ENCODE measurements at regions of chr7 and their contacts with region 1.

Region 1: DNA sequence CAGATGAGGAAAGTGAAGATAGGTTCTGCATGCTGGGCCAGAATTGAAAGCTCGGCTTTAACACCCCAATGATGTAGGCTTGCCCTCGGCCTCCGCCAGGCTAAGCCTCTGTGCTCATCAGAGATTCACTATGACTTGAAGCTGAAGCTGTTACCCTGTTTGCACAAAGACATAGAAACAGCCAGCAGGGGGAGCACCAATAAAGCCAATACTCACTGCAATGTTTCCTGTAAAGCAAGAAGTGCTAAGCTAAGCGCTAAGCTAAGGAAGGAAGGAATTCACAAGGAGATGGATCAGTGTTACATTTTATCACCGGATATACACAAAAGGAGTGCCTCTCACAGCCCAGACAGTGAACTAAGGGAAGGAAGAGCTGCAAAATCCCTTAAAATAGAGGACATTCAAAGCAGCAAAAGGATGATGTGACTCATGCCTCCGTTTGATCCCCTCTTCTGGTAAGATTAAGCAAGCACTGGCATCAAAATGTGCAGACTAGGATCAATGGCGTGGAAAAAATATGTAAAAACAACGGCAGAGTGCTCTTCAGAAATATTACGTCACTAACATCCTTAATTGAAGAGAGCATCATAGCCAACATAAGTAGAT is 153.8 kb downstream of the COBL start:
- DNase-seq: peak; percentile 88
- ATAC-seq: peak; percentile 94
- H3K4me3 Mint-ChIP-seq: no peak overlapping the region
- H3K27ac Mint-ChIP-seq: no peak overlapping the region
- H3K4me1 Mint-ChIP-seq: peaks cover 6% of the 10 kb centered on the region
- H3K27me3 Mint-ChIP-seq: peaks cover 11% of the 10 kb centered on the region
- CTCF ChIP-seq: peak; percentile 62

Region 2: GRCh38 chr7:50610521-50611277 is 552.1 kb before region 1 on chr7:
- CTCF ChIA-PET with region 1: interaction called, 12 read pairs
- POLR2A ChIA-PET with region 1: no interaction called
- intact Hi-C with region 1: no loop called
- DNase-seq: peak; percentile 80
- ATAC-seq: peak; percentile 83
- H3K4me3 Mint-ChIP-seq: no peak overlapping the region
- H3K27ac Mint-ChIP-seq: no peak overlapping the region
- H3K4me1 Mint-ChIP-seq: peaks cover 32% of the 10 kb centered on the region
- H3K27me3 Mint-ChIP-seq: no peaks in the 10 kb centered on the region
- CTCF ChIP-seq: no peak

Region 3: GRCh38 chr7:51055039-51055840 is 107.6 kb before region 1 on chr7:
- CTCF ChIA-PET with region 1: interaction called, 16 read pairs
- POLR2A ChIA-PET with region 1: no interaction called
- intact Hi-C with region 1: no loop called
- DNase-seq: no peak
- ATAC-seq: no peak
- H3K4me3 Mint-ChIP-seq: no peak overlapping the region
- H3K27ac Mint-ChIP-seq: no peak overlapping the region
- H3K4me1 Mint-ChIP-seq: no peaks in the 10 kb centered on the region
- H3K27me3 Mint-ChIP-seq: peaks cover 2% of the 10 kb centered on the region
- CTCF ChIP-seq: no peak

Region 4: DNA sequence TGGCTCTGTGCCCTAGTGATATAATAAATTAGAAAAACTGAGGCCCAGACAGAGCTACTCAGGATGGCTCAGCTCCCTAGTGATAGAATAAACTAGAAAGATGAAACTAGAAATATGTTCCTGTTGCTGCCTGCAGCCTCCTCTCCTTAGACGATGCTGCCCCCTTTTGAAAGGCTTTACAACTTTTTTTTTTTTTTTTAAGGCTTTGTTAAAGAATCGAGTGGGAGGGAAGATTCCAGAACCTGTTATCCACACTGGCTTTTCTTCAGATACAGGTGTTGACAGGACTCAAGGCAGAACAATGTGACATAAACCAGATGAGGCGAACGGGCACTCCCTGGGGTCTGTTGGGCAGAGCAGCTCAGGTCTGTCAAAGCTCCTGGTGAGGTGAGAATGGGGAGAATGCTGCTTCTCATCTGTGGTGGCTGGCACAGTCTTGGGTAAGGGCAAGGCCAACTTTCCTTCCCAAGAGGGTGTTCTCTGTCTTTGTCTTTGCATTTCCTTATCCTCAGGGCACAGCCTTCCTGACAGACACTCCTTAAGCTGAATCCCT is 21.3 kb before region 1 on chr7:
- CTCF ChIA-PET with region 1: interaction called, 33 read pairs
- POLR2A ChIA-PET with region 1: interaction called, 3 read pairs
- intact Hi-C with region 1: no loop called
- DNase-seq: peak; percentile 16
- ATAC-seq: peak; percentile 24
- H3K4me3 Mint-ChIP-seq: no peak overlapping the region
- H3K27ac Mint-ChIP-seq: no peak overlapping the region
- H3K4me1 Mint-ChIP-seq: peaks cover 3% of the 10 kb centered on the region
- H3K27me3 Mint-ChIP-seq: no peaks in the 10 kb centered on the region
- CTCF ChIP-seq: peak; percentile 69

Region 5: GRCh38 chr7:51186201-51186930 is 23.5 kb after region 1 on chr7:
- CTCF ChIA-PET with region 1: interaction called, 13 read pairs
- POLR2A ChIA-PET with region 1: no interaction called
- intact Hi-C with region 1: no loop called
- DNase-seq: no peak
- ATAC-seq: no peak
- H3K4me3 Mint-ChIP-seq: no peak overlapping the region
- H3K27ac Mint-ChIP-seq: no peak overlapping the region
- H3K4me1 Mint-ChIP-seq: no peaks in the 10 kb centered on the region
- H3K27me3 Mint-ChIP-seq: peaks cover 7% of the 10 kb centered on the region
- CTCF ChIP-seq: no peak

Region 6: GRCh38 chr7:51213618-51214017 is 50.8 kb after region 1 on chr7:
- CTCF ChIA-PET with region 1: no interaction called
- POLR2A ChIA-PET with region 1: no interaction called
- intact Hi-C with region 1: no loop called
- DNase-seq: peak; percentile 4
- ATAC-seq: no peak
- H3K4me3 Mint-ChIP-seq: no peak overlapping the region
- H3K27ac Mint-ChIP-seq: no peak overlapping the region
- H3K4me1 Mint-ChIP-seq: no peaks in the 10 kb centered on the region
- H3K27me3 Mint-ChIP-seq: no peaks in the 10 kb centered on the region
- CTCF ChIP-seq: no peak

Region 7: DNA sequence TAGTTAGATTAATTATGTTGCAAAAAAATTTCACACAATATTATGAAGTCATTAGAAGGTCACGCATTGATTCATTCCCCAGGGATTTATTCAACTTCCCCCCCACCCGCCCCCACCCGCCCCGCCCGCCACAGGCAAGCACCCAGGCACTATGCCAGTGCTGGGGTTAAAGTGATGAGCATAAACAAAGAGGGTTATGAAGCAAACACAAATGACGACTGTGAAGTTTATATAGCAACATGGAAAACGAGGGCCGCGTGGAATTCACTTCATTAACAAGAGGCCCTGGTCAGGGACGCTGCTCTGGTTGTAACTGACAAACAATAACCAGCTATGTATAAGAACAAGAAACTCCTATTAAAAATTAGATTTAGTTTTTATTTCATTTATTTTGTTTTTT is 810.2 kb after region 1 on chr7:
- CTCF ChIA-PET with region 1: no interaction called
- POLR2A ChIA-PET with region 1: no interaction called
- intact Hi-C with region 1: no loop called
- DNase-seq: no peak
- ATAC-seq: no peak
- H3K4me3 Mint-ChIP-seq: no peak overlapping the region
- H3K27ac Mint-ChIP-seq: no peak overlapping the region
- H3K4me1 Mint-ChIP-seq: no peaks in the 10 kb centered on the region
- H3K27me3 Mint-ChIP-seq: no peaks in the 10 kb centered on the region
- CTCF ChIP-seq: no peak

Measured in activated CD8-positive, alpha-beta T cell treated with anti-CD3 and anti-CD28 coated beads for 36 hours (primary cell).